Motor neuron (in vitro differentiated cells): ENCODE measurements at regions of chr13 and their contacts with region 1.

Region 1: GRCh38 chr13:21060987-21061763 is at the start of gene LATS2:
- ATAC-seq: peak; percentile 84 to 92 (median 89)
- H3K4me3 ChIP-seq: peak within 1 kb of the TSS; percentile 67 to 100 (median 89)
- H3K27ac ChIP-seq: peak within 1 kb of the TSS; percentile 8 to 85
- H3K4me1 ChIP-seq: peaks cover 0 to 6% of the 10 kb centered on the region in 2 donors
- total RNA-seq, gene LATS2: 4.8 to 13.0 (median 9.0) TPM

Region 2: GRCh38 chr13:21150013-21150412 is 88.8 kb after region 1 on chr13:
- in situ Hi-C with region 1: loop called in 1 of 9 experiments (anchors 25 kb)
- ATAC-seq: no peak
- H3K4me3 ChIP-seq: no peak overlapping the region
- H3K27ac ChIP-seq: no peak overlapping the region
- H3K4me1 ChIP-seq: no peaks in the 10 kb centered on the region

Region 3: GRCh38 chr13:21971662-21972621 is 910.8 kb after region 1 on chr13:
- in situ Hi-C with region 1: no loop called
- ATAC-seq: peak in 1 of 8 experiments; percentile 22
- H3K4me3 ChIP-seq: no peak overlapping the region
- H3K27ac ChIP-seq: no peak overlapping the region
- H3K4me1 ChIP-seq: no peaks in the 10 kb centered on the region